MCF 10A (cell line): ENCODE measurements at regions of chr21 and their contacts with region 1.

Region 1: GRCh38 chr21:38903690-38904139 is 98.0 kb downstream of the ETS2 start:
- DNase-seq: peak; percentile 98
- H3K4me3 Mint-ChIP-seq: peak overlapping the region; percentile 28
- H3K27ac Mint-ChIP-seq: peak overlapping the region; percentile 99
- H3K4me1 Mint-ChIP-seq: peaks cover 59% of the 10 kb centered on the region
- H3K27me3 Mint-ChIP-seq: no peaks in the 10 kb centered on the region
- CTCF ChIP-seq: no peak

Region 2: DNA sequence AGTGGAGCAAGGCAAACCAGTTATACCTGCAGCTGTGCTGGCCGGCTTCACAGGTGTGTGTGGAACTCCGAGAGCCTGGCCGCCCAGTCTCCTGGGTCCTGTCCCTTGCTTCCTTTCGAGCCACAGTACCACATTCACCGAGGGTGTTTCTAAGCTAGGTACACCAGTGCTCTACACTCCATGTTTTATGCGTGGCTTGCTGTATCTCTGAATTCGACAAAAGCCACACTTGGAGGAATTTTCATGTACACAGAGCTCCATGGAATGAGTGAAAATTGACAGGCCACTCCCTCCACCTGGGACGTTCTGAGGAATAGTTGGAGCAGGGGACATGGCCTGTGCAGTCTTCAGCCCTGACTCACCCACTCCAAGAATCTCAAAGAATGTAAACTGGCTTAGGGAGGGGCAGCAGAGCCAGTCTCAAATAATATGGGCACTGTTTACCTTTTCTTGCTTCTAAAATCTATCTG is 84.0 kb before region 1 on chr21:
- CTCF ChIA-PET with region 1: interaction called, 3 read pairs
- POLR2A ChIA-PET with region 1: interaction called, 20 read pairs
- intact Hi-C with region 1: no loop called
- DNase-seq: peak; percentile 71
- H3K4me3 Mint-ChIP-seq: peak overlapping the region; percentile 40
- H3K27ac Mint-ChIP-seq: peak overlapping the region; percentile 75
- H3K4me1 Mint-ChIP-seq: peaks cover 35% of the 10 kb centered on the region
- H3K27me3 Mint-ChIP-seq: no peaks in the 10 kb centered on the region
- CTCF ChIP-seq: no peak

Region 3: GRCh38 chr21:38839328-38840286 is 64.1 kb before region 1 on chr21:
- CTCF ChIA-PET with region 1: interaction called, 4 read pairs
- POLR2A ChIA-PET with region 1: interaction called, 20 read pairs
- intact Hi-C with region 1: no loop called
- DNase-seq: peak; percentile 89
- H3K4me3 Mint-ChIP-seq: peak overlapping the region; percentile 15
- H3K27ac Mint-ChIP-seq: peak overlapping the region; percentile 88
- H3K4me1 Mint-ChIP-seq: peaks cover 46% of the 10 kb centered on the region
- H3K27me3 Mint-ChIP-seq: no peaks in the 10 kb centered on the region
- CTCF ChIP-seq: no peak

Region 4: DNA sequence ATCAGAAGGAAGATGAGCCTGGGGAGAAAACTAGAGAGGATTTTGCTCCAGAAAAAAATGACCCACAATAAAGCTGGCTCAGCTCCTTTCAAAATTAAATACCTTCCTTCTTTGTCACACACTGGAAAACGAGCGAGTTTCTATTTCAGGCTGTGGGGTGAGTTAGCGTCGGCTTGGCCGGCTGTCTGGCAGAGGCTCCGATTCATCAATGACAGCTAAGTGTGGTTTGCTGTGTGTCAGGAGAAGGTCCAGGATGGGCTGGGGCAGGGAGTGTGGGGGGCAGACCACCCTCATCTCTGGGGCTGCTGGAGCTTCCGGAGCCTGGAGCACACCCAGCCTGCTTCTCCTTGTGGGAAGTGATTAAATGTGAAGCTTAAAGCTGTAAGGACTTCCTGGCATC is 22.2 kb after region 1 on chr21:
- CTCF ChIA-PET with region 1: interaction called, 3 read pairs
- POLR2A ChIA-PET with region 1: interaction called, 22 read pairs
- intact Hi-C with region 1: no loop called
- DNase-seq: peak; percentile 79
- H3K4me3 Mint-ChIP-seq: no peak overlapping the region
- H3K27ac Mint-ChIP-seq: peak overlapping the region; percentile 76
- H3K4me1 Mint-ChIP-seq: peaks cover 18% of the 10 kb centered on the region
- H3K27me3 Mint-ChIP-seq: no peaks in the 10 kb centered on the region
- CTCF ChIP-seq: no peak

Region 5: GRCh38 chr21:38993561-38993960 is 89.8 kb after region 1 on chr21:
- CTCF ChIA-PET with region 1: no interaction called
- POLR2A ChIA-PET with region 1: interaction called, 15 read pairs
- intact Hi-C with region 1: no loop called
- DNase-seq: peak; percentile 95
- H3K4me3 Mint-ChIP-seq: peak overlapping the region; percentile 11
- H3K27ac Mint-ChIP-seq: peak overlapping the region; percentile 94
- H3K4me1 Mint-ChIP-seq: peaks cover 34% of the 10 kb centered on the region
- H3K27me3 Mint-ChIP-seq: no peaks in the 10 kb centered on the region
- CTCF ChIP-seq: no peak

Region 6: GRCh38 chr21:39079617-39080016 is 175.9 kb after region 1 on chr21:
- CTCF ChIA-PET with region 1: no interaction called
- POLR2A ChIA-PET with region 1: interaction called, 10 read pairs
- intact Hi-C with region 1: no loop called
- DNase-seq: peak; percentile 76
- H3K4me3 Mint-ChIP-seq: no peak overlapping the region
- H3K27ac Mint-ChIP-seq: no peak overlapping the region
- H3K4me1 Mint-ChIP-seq: peaks cover 14% of the 10 kb centered on the region
- H3K27me3 Mint-ChIP-seq: no peaks in the 10 kb centered on the region
- CTCF ChIP-seq: no peak